ENCODE measurements at regions of chr10 and their contacts with region 1.

Region 1: GRCh38 chr10:23158370-23158769 is 33.7 kb upstream of the PTF1A start:
- DNase-seq: peak; percentile 55
- ATAC-seq: peak; percentile 83
- H3K4me3 ChIP-seq: no peak overlapping the region
- H3K27ac ChIP-seq: no peak overlapping the region
- H3K4me1 ChIP-seq: peaks cover 10% of the 10 kb centered on the region
- H3K27me3 ChIP-seq: peaks cover 2 to 8% of the 10 kb centered on the region in 2 experiments; a peak in 2 of 5 replicates
- CTCF ChIP-seq: peak; percentile 81
- EP300 ChIP-seq: no peak
- POLR2A ChIP-seq: no peak
- RAD21 ChIP-seq: peak; percentile 74

Region 2: GRCh38 chr10:23081891-23082290 is 76.5 kb before region 1 on chr10:
- CTCF ChIA-PET with region 1: no interaction called
- POLR2A ChIA-PET with region 1: no interaction called
- in situ Hi-C with region 1: no loop called
- intact Hi-C with region 1: loop called (anchors 2 kb)
- DNase-seq: peak; percentile 23
- ATAC-seq: peak; percentile 76
- H3K4me3 ChIP-seq: no peak overlapping the region
- H3K27ac ChIP-seq: no peak overlapping the region
- H3K4me1 ChIP-seq: no peaks in the 10 kb centered on the region
- H3K27me3 ChIP-seq: peaks cover 2 to 23% of the 10 kb centered on the region in 2 experiments; a peak in 4 of 5 replicates
- CTCF ChIP-seq: peak; percentile 40
- EP300 ChIP-seq: no peak
- POLR2A ChIP-seq: no peak
- RAD21 ChIP-seq: no peak

Region 3: GRCh38 chr10:23095404-23095965 is 62.9 kb before region 1 on chr10 and contains the start of gene MSRB2:
- CTCF ChIA-PET with region 1: no interaction called
- POLR2A ChIA-PET with region 1: no interaction called
- in situ Hi-C with region 1: no loop called
- intact Hi-C with region 1: loop called (anchors 5 kb)
- DNase-seq: peak; percentile 86
- ATAC-seq: peak; percentile 93
- H3K4me3 ChIP-seq: peak within 1 kb of the TSS; percentile 81 to 90 (median 81)
- H3K27ac ChIP-seq: peak within 1 kb of the TSS; percentile 74
- H3K4me1 ChIP-seq: peaks cover 52% of the 10 kb centered on the region
- H3K27me3 ChIP-seq: no peaks in the 10 kb centered on the region
- CTCF ChIP-seq: no peak
- EP300 ChIP-seq: no peak
- POLR2A ChIP-seq: peak; percentile 90 to 95
- RAD21 ChIP-seq: peak; percentile 41; the same call in 1 of the 2 replicates
- total RNA-seq, gene MSRB2: 5.2 and 8.3 TPM in 2 replicates

Region 4: DNA sequence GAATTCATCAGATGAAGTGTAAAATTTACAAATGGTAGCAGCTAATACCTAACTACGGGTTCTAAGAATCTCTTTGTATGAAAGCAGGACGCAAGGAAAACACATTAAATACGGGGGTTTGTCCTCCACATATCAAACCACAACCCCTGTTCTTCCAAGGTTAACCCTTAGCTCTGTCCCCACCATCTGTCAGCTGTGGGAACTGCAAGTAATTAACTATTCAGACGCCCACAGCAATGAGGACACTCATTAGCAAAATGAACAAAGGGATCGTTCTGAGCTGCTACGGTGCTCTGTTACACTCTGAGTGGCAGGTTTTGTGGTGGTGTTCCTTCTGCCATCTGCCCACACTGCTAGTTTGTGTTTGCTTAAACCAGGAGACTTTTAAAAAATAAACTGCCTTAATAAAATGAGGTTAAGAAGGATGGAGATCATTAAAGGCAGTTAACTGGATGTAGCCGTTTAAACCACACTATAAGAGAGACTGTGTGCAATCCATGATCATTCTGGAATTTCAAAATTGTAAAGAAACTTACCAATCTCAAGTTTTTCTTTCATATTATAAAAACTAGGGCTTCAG is 134.9 kb after region 1 on chr10:
- CTCF ChIA-PET with region 1: interaction called, 157 read pairs
- POLR2A ChIA-PET with region 1: no interaction called
- in situ Hi-C with region 1: loop called (anchors 5 kb)
- intact Hi-C with region 1: loop called (anchors 1 kb)
- DNase-seq: peak; percentile 53
- ATAC-seq: peak; percentile 85
- H3K4me3 ChIP-seq: no peak overlapping the region
- H3K27ac ChIP-seq: no peak overlapping the region
- H3K4me1 ChIP-seq: no peaks in the 10 kb centered on the region
- H3K27me3 ChIP-seq: 0 out of 5 replicates have a peak, but pooled peaks cover 0 to 3% of the 10 kb centered on the region in 2 experiments
- CTCF ChIP-seq: peak; percentile 89
- EP300 ChIP-seq: no peak
- POLR2A ChIP-seq: no peak
- RAD21 ChIP-seq: peak; percentile 75

Region 5: DNA sequence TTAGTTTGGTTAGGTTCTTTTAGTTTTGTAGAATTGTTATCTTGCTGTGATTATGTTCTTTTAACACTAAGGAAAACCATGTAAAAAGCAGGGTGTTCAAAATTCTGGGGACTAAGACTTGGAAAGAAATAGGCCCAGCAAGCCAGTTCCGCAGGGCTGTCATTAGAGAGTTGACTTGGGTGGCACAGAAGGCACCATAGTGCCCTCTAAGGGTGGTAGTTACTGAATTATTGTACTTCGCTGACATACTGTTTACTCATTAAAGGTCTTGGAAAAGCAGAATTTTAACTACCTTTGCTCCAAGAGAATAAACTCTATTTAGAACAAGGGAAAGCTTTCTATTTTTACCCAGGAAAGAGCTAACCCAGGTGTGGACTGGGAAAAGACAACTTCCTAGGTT is 367.0 kb after region 1 on chr10:
- CTCF ChIA-PET with region 1: interaction called, 7 read pairs
- POLR2A ChIA-PET with region 1: no interaction called
- in situ Hi-C with region 1: loop called (anchors 25 kb)
- intact Hi-C with region 1: loop called (anchors 2 kb)
- DNase-seq: peak; percentile 4
- ATAC-seq: peak; percentile 41; the same call in 1 of the 3 replicates
- H3K4me3 ChIP-seq: no peak overlapping the region
- H3K27ac ChIP-seq: no peak overlapping the region
- H3K4me1 ChIP-seq: no peaks in the 10 kb centered on the region
- H3K27me3 ChIP-seq: no peaks in the 10 kb centered on the region; a peak in 1 of 5 replicates
- CTCF ChIP-seq: peak; percentile 43
- EP300 ChIP-seq: no peak
- POLR2A ChIP-seq: no peak
- RAD21 ChIP-seq: no peak

Region 6: DNA sequence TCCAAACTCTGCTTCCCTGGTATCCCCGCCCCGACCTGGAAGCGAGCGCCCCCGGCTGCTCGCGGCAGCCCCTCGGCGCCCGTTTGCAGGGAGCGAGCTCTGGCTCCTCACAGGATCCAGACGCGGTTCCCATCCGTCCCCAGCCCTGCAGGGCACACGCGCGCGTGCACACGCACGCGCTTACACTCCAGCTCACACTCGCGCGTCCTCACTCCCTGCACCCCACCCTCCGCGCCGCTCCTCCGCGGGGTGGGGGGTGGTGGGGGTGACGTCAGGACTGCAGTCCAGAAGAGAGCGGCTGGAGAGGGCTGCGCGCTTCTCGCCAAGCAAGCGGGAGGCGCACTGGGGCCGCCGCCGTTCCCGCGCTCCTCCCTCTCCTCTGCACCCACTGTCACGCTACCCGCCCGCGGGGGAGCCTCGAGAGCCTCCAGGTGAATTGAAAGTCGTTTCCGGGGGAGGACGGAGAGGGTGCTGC is 536.1 kb after region 1 on chr10:
- CTCF ChIA-PET with region 1: no interaction called
- POLR2A ChIA-PET with region 1: no interaction called
- in situ Hi-C with region 1: loop called (anchors 25 kb)
- intact Hi-C with region 1: no loop called
- DNase-seq: no peak
- ATAC-seq: no peak; the same call in 2 of the 3 replicates
- H3K4me3 ChIP-seq: no peak overlapping the region
- H3K27ac ChIP-seq: no peak overlapping the region
- H3K4me1 ChIP-seq: no peaks in the 10 kb centered on the region
- H3K27me3 ChIP-seq: peaks cover 4 to 28% of the 10 kb centered on the region in 2 experiments; a peak in 3 of 5 replicates
- CTCF ChIP-seq: no peak
- EP300 ChIP-seq: no peak
- POLR2A ChIP-seq: no peak
- RAD21 ChIP-seq: no peak

Region 7: GRCh38 chr10:23702977-23703414 is 544.6 kb after region 1 on chr10:
- CTCF ChIA-PET with region 1: interaction called, 10 read pairs
- POLR2A ChIA-PET with region 1: no interaction called
- in situ Hi-C with region 1: loop called (anchors 25 kb)
- intact Hi-C with region 1: loop called (anchors 2 kb)
- DNase-seq: peak; percentile 58
- ATAC-seq: peak; percentile 98
- H3K4me3 ChIP-seq: no peak overlapping the region
- H3K27ac ChIP-seq: no peak overlapping the region
- H3K4me1 ChIP-seq: no peaks in the 10 kb centered on the region
- H3K27me3 ChIP-seq: no peaks in the 10 kb centered on the region
- CTCF ChIP-seq: peak; percentile 82
- EP300 ChIP-seq: no peak
- POLR2A ChIP-seq: no peak
- RAD21 ChIP-seq: 0 out of 2 replicates have a peak, but pooled peaks have one; percentile 53